Calu3 (cell line): ENCODE measurements at regions of chr5 and their contacts with region 1.

Region 1: GRCh38 chr5:74576941-74577456 is 63.5 kb downstream of the ENC1 start:
- DNase-seq: no peak
- H3K4me3 Mint-ChIP-seq: peak overlapping the region; percentile 26
- H3K27ac Mint-ChIP-seq: peak overlapping the region; percentile 32
- H3K4me1 Mint-ChIP-seq: peaks cover 79% of the 10 kb centered on the region
- H3K27me3 Mint-ChIP-seq: no peaks in the 10 kb centered on the region
- CTCF ChIP-seq: no peak

Region 2: DNA sequence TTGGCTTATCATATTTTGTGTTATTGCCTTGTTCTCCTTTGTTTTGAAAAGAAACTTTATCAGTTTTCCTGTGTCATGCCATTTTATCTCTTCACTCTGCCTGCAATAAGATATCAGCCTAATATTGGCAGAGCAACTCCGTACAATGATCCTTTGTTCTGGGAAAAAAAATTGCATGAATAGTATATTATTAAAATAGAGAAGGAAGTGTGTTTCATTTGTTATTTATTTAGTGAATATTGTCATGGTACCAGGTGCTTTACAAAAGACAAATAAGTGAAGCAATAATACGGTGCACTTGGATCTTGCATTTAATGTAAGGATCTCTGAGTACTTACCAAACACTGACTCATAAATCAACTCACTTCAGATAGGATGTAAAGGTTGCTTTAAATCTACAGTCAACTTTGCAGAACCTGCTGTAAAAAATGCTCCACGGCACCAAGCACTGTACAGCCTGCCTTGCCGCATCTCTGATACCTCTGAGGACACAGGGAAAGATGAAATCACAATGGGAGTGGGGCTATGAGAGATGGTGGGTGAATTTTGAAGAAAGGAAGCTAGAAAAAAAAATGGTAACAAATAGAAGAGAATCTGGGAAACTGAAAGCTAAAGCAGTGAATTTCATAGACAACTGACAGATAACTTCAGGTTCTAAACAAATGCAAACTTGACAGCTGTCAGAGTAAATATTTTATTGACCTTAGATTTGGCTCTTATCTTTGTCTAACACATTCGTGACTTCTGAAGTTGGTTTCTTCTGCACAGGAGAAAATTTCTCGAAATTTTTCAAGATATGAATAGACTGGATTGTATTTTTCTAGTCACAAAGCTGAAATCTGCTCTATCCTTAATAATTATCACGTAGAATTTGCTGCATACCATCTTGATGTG is 168.6 kb before region 1 on chr5:
- CTCF ChIA-PET with region 1: no interaction called
- intact Hi-C with region 1: loop called (anchors 5 kb)
- DNase-seq: no peak
- H3K4me3 Mint-ChIP-seq: peak overlapping the region; percentile 63
- H3K27ac Mint-ChIP-seq: peak overlapping the region; percentile 82
- H3K4me1 Mint-ChIP-seq: peaks cover 54% of the 10 kb centered on the region
- H3K27me3 Mint-ChIP-seq: no peaks in the 10 kb centered on the region
- CTCF ChIP-seq: no peak

Region 3: DNA sequence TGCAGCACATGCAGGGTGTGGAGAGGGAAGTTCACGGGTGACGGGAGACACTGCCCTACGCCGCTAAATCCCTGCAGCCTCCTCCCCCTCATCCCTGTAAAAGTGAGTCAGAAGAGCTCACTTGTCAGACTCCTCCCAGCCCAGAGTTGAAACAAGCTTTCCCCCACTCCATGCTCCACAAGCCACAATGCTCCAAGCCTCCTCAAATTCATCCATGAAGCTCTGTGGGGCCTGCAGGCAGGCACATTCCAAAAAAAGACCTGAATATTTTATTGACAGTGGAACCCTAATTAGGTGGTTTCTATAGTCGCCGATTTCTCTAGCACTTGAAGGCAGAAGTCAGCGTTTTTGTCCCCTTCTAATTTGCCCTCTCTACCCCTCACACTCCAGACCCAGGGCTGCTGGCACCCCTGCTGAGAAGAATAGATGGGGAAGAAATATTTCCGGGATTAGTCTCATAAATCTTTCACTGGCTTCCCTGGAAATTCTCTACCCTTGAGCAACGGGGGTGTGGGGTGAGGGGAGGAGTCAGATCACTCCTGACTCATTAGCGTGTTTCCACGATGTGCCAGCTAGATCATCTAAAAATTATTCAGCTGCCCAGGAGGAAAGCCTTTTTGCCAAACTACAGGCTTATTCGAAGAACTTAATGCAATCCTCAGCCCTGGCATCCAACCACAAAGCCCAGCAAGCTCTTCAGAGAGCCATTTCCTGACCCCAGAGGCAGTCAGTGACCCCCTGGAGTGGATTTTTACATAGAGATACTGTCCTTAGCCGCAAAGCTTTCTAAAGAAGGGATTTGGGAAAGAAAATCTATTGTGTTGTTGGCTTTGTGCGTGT is 33.6 kb before region 1 on chr5:
- CTCF ChIA-PET with region 1: interaction called, 3 read pairs
- intact Hi-C with region 1: loop called (anchors 2 kb)
- DNase-seq: peak; percentile 56
- H3K4me3 Mint-ChIP-seq: peak overlapping the region; percentile 39
- H3K27ac Mint-ChIP-seq: peak overlapping the region; percentile 67
- H3K4me1 Mint-ChIP-seq: peaks cover 27% of the 10 kb centered on the region
- H3K27me3 Mint-ChIP-seq: no peaks in the 10 kb centered on the region
- CTCF ChIP-seq: no peak

Region 4: GRCh38 chr5:74631081-74631953 is 54.3 kb after region 1 on chr5:
- CTCF ChIA-PET with region 1: interaction called, 9 read pairs
- intact Hi-C with region 1: loop called (anchors 2 kb)
- DNase-seq: no peak
- H3K4me3 Mint-ChIP-seq: peak overlapping the region; percentile 65
- H3K27ac Mint-ChIP-seq: peak overlapping the region; percentile 94
- H3K4me1 Mint-ChIP-seq: peaks cover 80% of the 10 kb centered on the region
- H3K27me3 Mint-ChIP-seq: no peaks in the 10 kb centered on the region
- CTCF ChIP-seq: no peak